ENCODE measurements at regions of chr1 and their contacts with region 1.

Region 1: GRCh38 chr1:225881969-225882693 is at the start of gene TMEM63A:
- DNase-seq: peak; percentile 92
- H3K4me3 Mint-ChIP-seq: peak within 1 kb of the TSS; percentile 91
- H3K27ac Mint-ChIP-seq: peak within 1 kb of the TSS; percentile 82
- H3K4me1 Mint-ChIP-seq: peaks cover 51% of the 10 kb centered on the region
- H3K27me3 Mint-ChIP-seq: no peaks in the 10 kb centered on the region
- CTCF ChIP-seq: peak; percentile 25
- total RNA-seq, gene TMEM63A: 52.1 and 71.2 TPM in 2 replicates

Region 2: GRCh38 chr1:225845571-225846259 is 36.4 kb before region 1 on chr1:
- CTCF ChIA-PET with region 1: interaction called, 18 read pairs
- POLR2A ChIA-PET with region 1: no interaction called
- intact Hi-C with region 1: no loop called
- DNase-seq: peak; percentile 95
- H3K4me3 Mint-ChIP-seq: no peak overlapping the region
- H3K27ac Mint-ChIP-seq: no peak overlapping the region
- H3K4me1 Mint-ChIP-seq: no peaks in the 10 kb centered on the region
- H3K27me3 Mint-ChIP-seq: no peaks in the 10 kb centered on the region
- CTCF ChIP-seq: peak; percentile 97

Region 3: DNA sequence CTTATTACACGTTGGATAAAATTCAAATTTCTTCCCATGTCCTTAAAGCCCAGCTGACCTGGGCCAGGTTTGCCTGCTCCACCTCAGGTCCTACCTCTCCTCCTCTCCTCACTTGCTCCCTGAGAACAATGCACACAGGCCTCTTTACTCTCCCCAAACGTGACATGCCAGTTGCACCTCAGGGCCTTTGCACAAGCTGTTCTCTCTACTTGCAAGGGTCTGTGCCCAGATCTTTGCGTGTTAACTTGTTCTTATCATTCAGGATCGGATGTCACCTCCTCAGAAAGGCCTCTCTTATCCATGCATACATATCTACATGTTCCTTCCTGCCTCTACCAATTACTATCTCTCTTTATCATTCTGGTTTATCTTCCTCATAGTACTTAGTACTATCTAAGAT is 21.5 kb after region 1 on chr1:
- CTCF ChIA-PET with region 1: interaction called, 14 read pairs
- POLR2A ChIA-PET with region 1: interaction called, 15 read pairs
- intact Hi-C with region 1: no loop called
- DNase-seq: no peak
- H3K4me3 Mint-ChIP-seq: no peak overlapping the region
- H3K27ac Mint-ChIP-seq: no peak overlapping the region
- H3K4me1 Mint-ChIP-seq: no peaks in the 10 kb centered on the region
- H3K27me3 Mint-ChIP-seq: no peaks in the 10 kb centered on the region
- CTCF ChIP-seq: no peak

Region 4: DNA sequence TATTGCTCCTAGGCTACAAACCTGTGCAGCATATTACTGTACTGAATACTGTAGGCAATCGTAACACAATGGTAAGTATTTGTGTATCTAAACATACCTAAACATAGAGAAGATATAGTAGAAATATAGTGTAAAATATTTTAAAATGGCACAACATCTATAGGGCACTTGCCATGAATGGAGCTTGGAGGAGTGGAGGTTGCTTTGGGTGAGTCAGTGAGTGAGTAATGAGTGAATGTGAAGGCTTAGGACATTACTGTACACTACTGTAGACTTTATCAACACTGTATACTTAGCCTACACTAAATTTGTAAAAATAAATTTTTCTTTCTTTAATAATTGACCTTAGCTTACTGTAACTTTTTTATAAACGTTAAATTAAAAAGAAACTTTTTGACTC is 50.9 kb after region 1 on chr1:
- CTCF ChIA-PET with region 1: interaction called, 17 read pairs
- POLR2A ChIA-PET with region 1: interaction called, 10 read pairs
- intact Hi-C with region 1: no loop called
- DNase-seq: peak; percentile 74
- H3K4me3 Mint-ChIP-seq: no peak overlapping the region
- H3K27ac Mint-ChIP-seq: no peak overlapping the region
- H3K4me1 Mint-ChIP-seq: peaks cover 15% of the 10 kb centered on the region
- H3K27me3 Mint-ChIP-seq: no peaks in the 10 kb centered on the region
- CTCF ChIP-seq: no peak

Region 5: GRCh38 chr1:225987491-225988316 is 105.6 kb after region 1 on chr1:
- CTCF ChIA-PET with region 1: interaction called, 18 read pairs
- POLR2A ChIA-PET with region 1: interaction called, 3 read pairs
- intact Hi-C with region 1: no loop called
- DNase-seq: peak; percentile 77
- H3K4me3 Mint-ChIP-seq: no peak overlapping the region
- H3K27ac Mint-ChIP-seq: no peak overlapping the region
- H3K4me1 Mint-ChIP-seq: peaks cover 6% of the 10 kb centered on the region
- H3K27me3 Mint-ChIP-seq: no peaks in the 10 kb centered on the region
- CTCF ChIP-seq: peak; percentile 89

Measured in MCF 10A (cell line).